Psoas muscle (tissue), 8 donors: ENCODE measurements at regions of chr16 and their contacts with region 1.

Region 1: DNA sequence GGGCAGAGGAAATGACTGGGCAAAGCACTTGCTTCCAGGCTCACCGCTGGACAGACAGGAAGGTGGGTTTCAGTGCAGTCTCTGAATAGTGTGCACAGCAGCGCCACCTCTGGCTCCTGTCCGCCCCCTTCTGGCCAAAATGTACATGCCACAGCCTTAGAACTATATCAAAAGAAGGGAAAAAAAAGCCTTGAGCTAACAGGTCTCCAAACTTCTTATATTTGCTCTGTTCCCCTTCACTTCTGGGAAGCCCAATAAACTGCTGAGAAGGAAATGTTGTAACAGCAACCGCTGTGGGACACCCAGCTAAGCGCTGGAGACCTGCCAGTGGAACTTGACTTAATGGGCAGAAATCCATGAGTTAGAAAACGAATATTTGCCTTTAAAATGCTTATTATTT is 17.5 kb downstream of the COG7 start:
- DNase-seq: peak; percentile 52 to 64
- ATAC-seq: peak; percentile 47 to 87 (median 80)
- H3K4me3 ChIP-seq: no peak overlapping the region
- H3K27ac ChIP-seq: no peak overlapping the region
- H3K4me1 ChIP-seq: peaks cover 15% of the 10 kb centered on the region
- H3K27me3 ChIP-seq: no peaks in the 10 kb centered on the region
- CTCF ChIP-seq: peak; percentile 64

Region 2: GRCh38 chr16:23081675-23082119 is 353.8 kb before region 1 on chr16:
- intact Hi-C with region 1: loop called in 1 of 2 experiments (anchors 10 kb)
- DNase-seq: no peak
- ATAC-seq: no peak
- H3K4me3 ChIP-seq: no peak overlapping the region
- H3K27ac ChIP-seq: no peak overlapping the region
- H3K4me1 ChIP-seq: no peaks in the 10 kb centered on the region
- H3K27me3 ChIP-seq: no peaks in the 10 kb centered on the region
- CTCF ChIP-seq: no peak

Region 3: DNA sequence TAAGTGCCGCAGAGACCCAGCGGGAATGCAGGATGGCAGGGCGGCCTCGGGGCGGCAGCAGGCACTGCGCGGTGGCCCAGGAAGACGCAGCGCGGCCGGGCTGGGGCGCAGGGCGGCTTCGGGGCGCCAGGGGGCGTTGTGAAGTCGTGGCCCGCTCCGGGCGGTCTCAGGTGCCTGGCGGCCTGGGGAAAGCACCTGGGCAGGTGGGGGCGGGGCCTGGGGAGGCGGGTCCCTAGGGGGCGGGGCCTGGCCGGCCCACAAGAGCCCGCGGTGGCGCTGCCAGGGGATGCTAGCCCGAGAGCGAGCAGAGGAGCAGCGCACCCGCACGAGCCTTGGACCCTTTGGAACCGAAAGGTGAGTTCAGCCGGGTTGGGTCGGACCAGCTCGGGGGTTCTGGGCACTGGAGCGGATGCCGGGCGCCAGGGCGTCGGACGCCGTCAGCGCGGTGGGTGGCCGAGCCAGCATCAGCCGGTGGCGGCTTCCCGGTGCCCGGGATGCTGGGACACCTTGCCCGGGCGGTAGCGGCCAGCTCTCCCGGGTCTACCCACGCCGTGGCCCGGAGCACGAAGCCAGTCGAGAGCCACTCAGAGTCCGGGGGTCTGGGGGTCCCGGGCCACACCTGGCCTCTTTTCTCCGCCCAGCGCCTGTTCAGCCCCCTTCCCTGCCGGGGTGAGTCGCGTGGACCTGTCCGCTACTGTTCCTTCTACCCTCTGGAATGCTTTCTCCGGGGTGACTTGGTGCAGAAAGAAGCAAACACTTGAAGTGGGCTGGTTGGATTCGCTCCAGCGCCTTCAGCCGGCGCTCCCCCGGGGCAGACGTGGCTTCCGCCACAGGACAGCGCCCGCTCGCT is 252.8 kb before region 1 on chr16 and contains the start of gene SCNN1G:
- intact Hi-C with region 1: loop called (anchors 1 kb)
- DNase-seq: peak; percentile 71 to 83
- ATAC-seq: peak; percentile 97 to 99 (median 98)
- H3K4me3 ChIP-seq: peak within 1 kb of the TSS; percentile 56
- H3K27ac ChIP-seq: no peak within 1 kb of the TSS
- H3K4me1 ChIP-seq: peaks cover 10% of the 10 kb centered on the region
- H3K27me3 ChIP-seq: peaks cover 0 to 57% (median 7%) of the 10 kb centered on the region in 3 donors
- CTCF ChIP-seq: peak; percentile 89
- total RNA-seq, gene SCNN1G: not detected

Region 4: DNA sequence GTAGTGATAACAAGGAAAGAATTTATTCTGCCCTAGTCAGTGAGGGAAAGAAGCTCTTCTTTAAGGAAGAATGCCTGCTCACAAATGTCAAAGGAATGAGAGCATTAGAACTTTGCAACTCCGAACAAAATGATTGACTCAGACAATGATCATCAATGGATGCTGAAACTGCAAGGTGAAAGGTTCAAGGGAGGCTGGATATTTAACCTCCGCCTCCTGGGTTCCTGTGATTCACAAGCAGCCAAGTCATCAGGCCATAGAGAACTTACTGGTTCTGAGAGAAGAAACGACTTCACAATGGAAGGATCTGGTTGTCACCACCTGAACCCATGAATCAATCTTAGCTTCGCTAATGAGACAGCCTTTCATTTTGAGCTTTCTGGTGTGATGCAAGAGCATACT is 149.4 kb before region 1 on chr16:
- intact Hi-C with region 1: loop called in 1 of 2 experiments (anchors 10 kb)
- DNase-seq: no peak
- ATAC-seq: no peak
- H3K4me3 ChIP-seq: no peak overlapping the region
- H3K27ac ChIP-seq: no peak overlapping the region
- H3K4me1 ChIP-seq: no peaks in the 10 kb centered on the region
- H3K27me3 ChIP-seq: peaks cover 0 to 8% (median 2%) of the 10 kb centered on the region in 3 donors
- CTCF ChIP-seq: no peak